ENCODE measurements at regions of chr3 and their contacts with region 1.

Region 1: GRCh38 chr3:32401556-32402081 is 10.0 kb downstream of the CMTM7 start:
- DNase-seq: peak; percentile 67 to 73
- H3K4me3 ChIP-seq: peak overlapping the region; percentile 23 to 51
- H3K27ac ChIP-seq: peak overlapping the region; percentile 70 to 80
- H3K4me1 ChIP-seq: peaks cover 0 to 6% of the 10 kb centered on the region in 2 donors
- H3K27me3 ChIP-seq: no peaks in the 10 kb centered on the region
- CTCF ChIP-seq: no peak
- POLR2A ChIP-seq: peak in 1 of 2 donors; percentile 37

Region 2: DNA sequence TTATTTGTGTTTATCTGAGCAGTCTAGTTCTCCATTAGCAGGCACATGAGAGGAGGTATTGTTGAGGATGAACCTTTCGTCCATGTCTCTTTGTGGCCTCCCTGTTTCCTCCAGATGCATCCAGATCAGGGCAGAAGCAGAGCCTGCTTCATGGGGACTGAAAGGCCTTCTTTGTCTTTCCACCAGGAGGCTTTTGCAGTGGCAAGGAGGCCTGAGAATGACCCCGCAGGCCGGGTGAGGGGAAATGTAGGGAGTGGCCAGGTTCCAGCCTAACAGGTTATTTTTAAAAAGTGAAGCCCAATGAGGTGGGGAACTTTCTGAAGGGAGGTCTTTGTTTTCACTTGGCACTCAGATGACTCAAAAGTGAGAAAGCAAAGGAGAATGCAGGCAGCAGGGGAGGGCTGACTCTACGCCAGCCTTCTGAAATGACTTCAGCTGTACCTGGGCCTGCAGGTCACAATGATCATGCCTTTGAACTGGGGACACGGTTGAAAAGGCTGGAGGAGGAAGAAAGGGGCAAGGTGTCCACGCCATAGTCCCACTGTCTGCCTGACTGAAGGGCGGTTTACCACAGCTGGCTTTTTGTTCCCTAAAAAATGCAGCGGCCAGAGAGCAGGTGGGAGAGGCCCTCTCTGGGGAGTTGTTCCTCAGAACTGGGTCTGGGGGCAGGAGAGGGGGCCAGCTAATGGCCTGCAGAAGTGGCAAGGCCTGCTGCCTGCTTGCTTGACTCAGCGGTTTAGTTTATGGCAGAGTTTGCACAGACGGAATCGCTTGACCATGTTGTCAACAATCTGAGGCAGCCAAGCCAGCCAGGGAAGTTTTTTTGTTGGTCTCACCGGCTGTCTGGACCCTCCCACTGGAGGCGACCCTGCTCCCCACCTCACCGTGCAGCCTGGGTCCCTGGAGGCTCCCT is 18.8 kb after region 1 on chr3:
- intact Hi-C with region 1: loop called (anchors 1 kb)
- DNase-seq: no peak
- H3K4me3 ChIP-seq: no peak overlapping the region
- H3K27ac ChIP-seq: peak overlapping the region; percentile 40 to 56
- H3K4me1 ChIP-seq: no peaks in the 10 kb centered on the region
- H3K27me3 ChIP-seq: no peaks in the 10 kb centered on the region
- CTCF ChIP-seq: no peak
- POLR2A ChIP-seq: no peak

Region 3: DNA sequence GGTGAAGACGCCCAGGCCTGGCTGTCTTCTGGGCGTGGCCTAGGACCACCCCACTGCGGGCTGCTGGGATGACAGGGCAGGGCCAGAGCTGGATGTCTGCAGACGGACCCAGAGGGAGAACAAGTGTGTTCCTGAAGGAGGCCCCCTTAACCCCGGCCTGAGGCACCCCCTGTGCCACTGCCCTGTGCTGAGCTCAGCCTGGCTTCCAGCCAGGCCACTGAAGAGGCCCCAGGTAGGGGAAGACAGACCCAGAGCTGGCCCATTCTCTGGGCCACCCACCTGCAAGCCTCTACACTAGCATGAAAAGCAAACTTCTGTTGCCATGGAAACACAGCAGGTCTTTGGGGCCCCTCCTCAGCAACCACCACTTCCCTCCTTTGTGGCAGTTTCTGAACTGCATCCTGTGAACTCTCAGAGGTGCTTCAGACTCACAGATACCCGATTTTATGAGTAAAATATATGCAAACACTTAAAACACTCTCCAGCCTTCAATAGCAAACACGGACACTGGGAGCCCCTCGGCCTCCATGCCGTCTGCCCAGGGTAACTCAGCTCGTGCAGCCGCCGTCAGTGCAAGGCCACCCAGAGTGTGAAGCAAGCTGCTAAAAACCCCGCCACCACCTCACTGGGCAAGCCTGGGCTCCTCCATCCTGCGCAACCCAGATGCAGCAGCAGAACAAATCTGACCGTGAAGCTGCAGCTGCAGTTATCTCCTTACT is 58.6 kb after region 1 on chr3:
- intact Hi-C with region 1: no loop called
- DNase-seq: no peak
- H3K4me3 ChIP-seq: no peak overlapping the region
- H3K27ac ChIP-seq: no peak overlapping the region
- H3K4me1 ChIP-seq: no peaks in the 10 kb centered on the region
- H3K27me3 ChIP-seq: no peaks in the 10 kb centered on the region
- CTCF ChIP-seq: no peak
- POLR2A ChIP-seq: no peak